ENCODE measurements at regions of chr1 and their contacts with region 1.

Region 1: DNA sequence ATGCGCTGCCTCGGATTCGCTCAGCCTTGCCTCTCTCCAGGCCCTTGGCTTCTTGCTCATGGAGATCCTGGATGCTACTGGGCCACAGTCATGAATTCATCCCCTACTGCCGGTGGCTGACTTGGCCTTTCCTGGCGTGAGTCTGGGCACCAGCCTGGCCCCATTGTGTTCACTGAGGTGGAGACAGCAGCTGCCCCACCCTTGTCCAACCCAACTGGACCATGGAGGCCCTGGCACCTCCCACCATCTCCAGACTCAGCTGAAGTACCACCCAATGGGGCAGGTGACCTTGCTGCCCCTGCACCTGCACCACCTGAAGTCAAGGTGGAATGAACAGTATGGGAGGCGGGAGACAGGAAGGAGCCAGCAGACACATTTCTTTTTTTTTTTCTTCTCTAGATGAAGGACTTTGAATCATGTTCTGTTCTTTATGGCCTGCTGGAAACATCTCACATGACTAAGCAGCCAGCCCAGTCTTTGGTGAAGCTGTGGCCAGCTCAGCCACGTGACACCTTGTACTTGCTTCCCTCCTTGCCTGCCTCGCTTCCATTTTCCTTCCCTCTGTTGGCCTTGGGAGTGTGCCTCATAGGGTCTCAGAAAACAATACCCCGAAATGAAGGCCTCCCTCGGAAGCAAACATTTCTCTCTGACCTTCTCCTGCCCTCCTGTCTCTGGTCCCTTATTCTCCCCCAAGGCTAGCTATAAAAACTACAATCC is 3.8 kb upstream of the SLC30A2 start:
- DNase-seq: no peak
- H3K4me3 ChIP-seq: no peak overlapping the region
- H3K27ac ChIP-seq: no peak overlapping the region
- H3K4me1 ChIP-seq: no peaks in the 10 kb centered on the region
- H3K27me3 ChIP-seq: peaks cover 3% of the 10 kb centered on the region
- CTCF ChIP-seq: no peak
- EP300 ChIP-seq: no peak
- POLR2A ChIP-seq: no peak

Region 2: GRCh38 chr1:27934818-27935549 is 1885.3 kb after region 1 on chr1 and contains the start of gene SMPDL3B:
- intact Hi-C with region 1: loop called in 1 of 4 experiments (anchors 5 kb)
- DNase-seq: no peak
- H3K4me3 ChIP-seq: no peak within 1 kb of the TSS
- H3K27ac ChIP-seq: no peak within 1 kb of the TSS
- H3K4me1 ChIP-seq: peaks cover 2% of the 10 kb centered on the region
- H3K27me3 ChIP-seq: no peaks in the 10 kb centered on the region
- CTCF ChIP-seq: no peak
- EP300 ChIP-seq: no peak
- POLR2A ChIP-seq: no peak
- total RNA-seq, gene SMPDL3B: 0.40 to 21.1 (median 0.77) TPM in 5 of 7 donors, not detected in the others